ENCODE measurements at regions of chr1 and their contacts with region 1.

Region 1: DNA sequence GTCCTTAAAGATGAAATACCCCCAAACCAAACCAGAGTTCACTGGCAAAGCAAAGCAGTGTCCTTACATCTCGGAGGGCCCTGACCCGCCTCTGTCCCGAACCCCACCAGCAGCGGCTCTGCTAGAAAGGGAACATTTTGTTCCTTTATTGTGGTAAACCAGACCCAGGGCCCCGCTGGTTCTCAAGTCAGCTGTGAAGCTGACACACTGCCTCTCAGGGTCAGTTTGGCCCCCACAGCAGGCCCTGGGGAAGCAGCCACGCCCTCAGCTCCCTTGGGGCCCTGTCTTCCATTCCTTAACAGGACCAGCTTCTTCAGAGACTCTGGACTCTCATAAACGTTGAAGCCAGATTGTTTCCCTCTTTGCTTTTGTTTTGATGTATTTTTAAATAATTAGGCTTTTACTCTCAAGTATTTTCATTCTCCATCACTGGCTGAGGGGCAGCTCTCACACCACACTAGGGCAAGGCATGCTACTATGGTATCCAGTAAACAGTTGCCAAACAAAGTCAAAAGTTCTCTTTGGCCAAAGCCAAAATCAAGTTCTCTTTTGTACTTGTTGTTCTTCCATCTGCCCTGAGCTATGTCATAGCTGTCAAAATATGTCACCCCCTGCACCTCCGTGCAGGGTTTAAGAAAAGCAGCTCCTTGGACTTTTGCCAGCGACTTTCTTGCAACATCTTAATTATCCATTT is 61.1 kb upstream of the ANGPTL1 start:
- DNase-seq: peak; percentile 85 to 95 (median 92)
- H3K4me3 ChIP-seq: no peak overlapping the region
- H3K27ac ChIP-seq: peak overlapping the region; percentile 38 to 89
- H3K4me1 ChIP-seq: peaks cover 34% of the 10 kb centered on the region
- H3K27me3 ChIP-seq: no peaks in the 10 kb centered on the region
- CTCF ChIP-seq: no peak
- EP300 ChIP-seq: peak; percentile 93
- POLR2A ChIP-seq: peak; percentile 43

Region 2: GRCh38 chr1:178818416-178818815 is 113.6 kb before region 1 on chr1:
- intact Hi-C with region 1: loop called in 1 of 4 experiments (anchors 10 kb)
- DNase-seq: no peak
- H3K4me3 ChIP-seq: no peak overlapping the region
- H3K27ac ChIP-seq: no peak overlapping the region
- H3K4me1 ChIP-seq: no peaks in the 10 kb centered on the region
- H3K27me3 ChIP-seq: no peaks in the 10 kb centered on the region
- CTCF ChIP-seq: no peak
- EP300 ChIP-seq: no peak
- POLR2A ChIP-seq: no peak

Region 3: GRCh38 chr1:178869119-178869697 is 62.8 kb before region 1 on chr1:
- intact Hi-C with region 1: loop called in 3 of 4 experiments (anchors 5 to 10 kb)
- DNase-seq: no peak
- H3K4me3 ChIP-seq: peak overlapping the region; percentile 35
- H3K27ac ChIP-seq: peak overlapping the region in 1 of 2 donors; percentile 73
- H3K4me1 ChIP-seq: peaks cover 5% of the 10 kb centered on the region
- H3K27me3 ChIP-seq: no peaks in the 10 kb centered on the region
- CTCF ChIP-seq: no peak
- EP300 ChIP-seq: no peak
- POLR2A ChIP-seq: no peak

Region 4: DNA sequence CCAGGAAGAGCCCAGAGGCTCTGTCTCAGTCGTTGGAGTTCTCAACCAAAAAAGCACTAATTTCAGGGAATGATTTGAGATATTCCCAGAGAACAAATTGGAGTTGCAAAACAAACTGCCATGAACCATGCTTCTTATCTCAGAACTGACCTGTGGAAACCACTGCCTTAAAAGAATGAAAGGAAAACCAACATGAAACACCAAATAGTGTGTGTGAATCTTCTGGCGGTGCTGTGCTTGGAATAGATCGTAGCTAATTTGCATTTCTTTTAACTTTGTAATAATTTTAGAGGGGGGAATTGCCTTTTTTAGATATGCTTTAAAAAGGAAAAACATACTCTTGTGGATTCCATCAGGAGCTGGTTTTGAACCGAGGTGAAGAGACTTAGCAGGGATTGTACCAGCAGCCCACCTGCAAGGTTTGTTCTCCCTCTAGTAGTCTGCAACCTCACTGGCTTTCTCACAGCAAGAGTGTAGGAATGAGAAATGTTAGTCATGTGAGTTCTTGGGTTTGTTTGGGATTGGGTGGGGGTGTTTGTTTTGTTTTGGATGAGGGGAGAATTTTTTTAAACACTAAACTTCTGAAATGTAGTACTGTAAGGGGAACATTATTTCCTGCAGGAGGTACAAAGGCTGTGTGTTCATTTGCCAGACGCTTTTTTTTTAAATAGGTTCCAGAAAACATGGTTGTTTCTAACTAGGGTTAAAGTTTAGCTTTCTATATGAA is 15.4 kb before region 1 on chr1:
- intact Hi-C with region 1: loop called in 1 of 4 experiments (anchors 1 kb)
- DNase-seq: peak in 1 of 5 donors; percentile 22
- H3K4me3 ChIP-seq: peak overlapping the region; percentile 2
- H3K27ac ChIP-seq: peak overlapping the region in 1 of 2 donors; percentile 49
- H3K4me1 ChIP-seq: peaks cover 2% of the 10 kb centered on the region
- H3K27me3 ChIP-seq: no peaks in the 10 kb centered on the region
- CTCF ChIP-seq: no peak
- EP300 ChIP-seq: no peak
- POLR2A ChIP-seq: no peak